MCF 10A (cell line): ENCODE measurements at regions of chr9 and their contacts with region 1.

Region 1: DNA sequence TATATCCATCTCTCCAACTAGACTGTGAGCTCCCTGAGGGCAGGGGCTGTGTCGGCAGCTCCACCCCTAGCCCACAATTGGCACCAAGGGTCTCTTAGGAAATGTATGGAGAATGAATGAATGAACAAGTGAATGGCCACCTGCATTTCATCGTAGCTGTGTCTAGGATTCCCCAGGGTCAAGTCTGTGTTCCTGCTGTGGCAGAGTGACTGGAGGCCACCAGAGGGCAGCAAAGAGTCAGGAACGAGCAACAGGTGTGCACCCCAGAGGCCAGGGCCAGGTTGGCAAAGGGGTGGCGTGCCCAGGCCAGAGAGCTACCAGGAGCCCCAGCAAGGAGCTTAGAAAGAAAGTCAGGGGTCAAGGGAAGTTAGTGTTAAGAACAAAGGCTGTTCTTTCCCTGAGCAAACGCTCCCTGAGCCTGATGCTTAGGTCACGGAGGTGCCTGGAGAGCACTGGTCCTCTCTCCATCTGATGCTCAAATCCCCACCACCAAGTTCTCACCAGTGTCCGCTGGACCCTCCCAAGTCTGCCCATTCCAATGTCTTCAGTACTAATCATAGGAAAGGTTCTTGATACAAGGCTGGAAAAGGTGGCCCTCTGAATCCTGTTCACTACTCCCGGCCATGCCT is 160.7 kb downstream of the PAX5 start:
- DNase-seq: peak; percentile 73
- H3K4me3 Mint-ChIP-seq: no peak overlapping the region
- H3K27ac Mint-ChIP-seq: no peak overlapping the region
- H3K4me1 Mint-ChIP-seq: no peaks in the 10 kb centered on the region
- H3K27me3 Mint-ChIP-seq: peaks cover 63% of the 10 kb centered on the region
- CTCF ChIP-seq: peak; percentile 97

Region 2: DNA sequence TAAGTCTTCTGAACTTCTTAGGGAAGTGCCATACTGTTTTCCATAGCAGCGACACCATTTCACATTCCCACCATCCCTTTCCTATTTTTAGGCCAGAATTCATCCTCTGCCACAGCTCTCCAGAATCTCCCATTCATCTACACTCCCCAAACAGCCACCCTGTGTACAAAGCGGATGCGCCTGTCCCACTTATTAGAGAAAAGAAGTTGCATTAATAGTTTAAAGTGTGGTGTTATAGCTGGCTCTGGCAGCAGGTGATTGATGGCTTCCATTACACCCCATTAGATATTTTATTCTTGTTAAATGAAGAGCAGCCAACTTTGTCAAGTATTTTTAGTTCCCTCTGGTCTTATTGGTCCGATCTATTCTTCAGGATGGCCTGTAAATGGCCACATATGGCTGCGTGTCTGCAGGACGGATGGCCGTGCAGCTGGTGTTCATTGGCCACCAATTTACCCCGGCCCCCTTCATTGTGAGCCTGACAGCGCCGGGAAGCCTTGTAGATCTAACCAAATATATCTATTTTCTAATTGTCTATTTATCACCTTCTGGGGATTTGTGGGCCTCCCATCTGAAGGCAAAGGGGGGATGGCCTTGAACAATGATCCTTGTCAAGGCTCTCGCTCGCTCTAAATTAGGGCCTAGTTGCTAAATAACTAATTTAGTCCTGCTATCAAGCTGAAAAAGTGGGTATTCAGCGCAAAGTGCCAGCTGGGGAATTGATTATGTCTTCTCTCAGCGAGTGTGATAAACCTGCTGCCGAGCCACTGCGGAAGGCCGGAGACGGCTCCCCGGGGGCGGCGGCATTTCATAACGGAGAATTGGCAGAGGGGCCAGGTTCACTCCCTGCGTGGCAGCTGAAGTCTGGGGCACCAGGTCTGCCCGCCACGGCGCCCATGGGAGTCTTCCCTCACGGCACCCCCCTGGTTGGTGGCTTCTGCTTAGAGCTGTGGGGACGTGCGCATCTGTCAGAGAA is 159.6 kb before region 1 on chr9:
- CTCF ChIA-PET with region 1: no interaction called
- POLR2A ChIA-PET with region 1: no interaction called
- intact Hi-C with region 1: no loop called
- DNase-seq: no peak
- H3K4me3 Mint-ChIP-seq: no peak overlapping the region
- H3K27ac Mint-ChIP-seq: no peak overlapping the region
- H3K4me1 Mint-ChIP-seq: no peaks in the 10 kb centered on the region
- H3K27me3 Mint-ChIP-seq: peaks cover 79% of the 10 kb centered on the region
- CTCF ChIP-seq: no peak

Region 3: GRCh38 chr9:36748322-36748899 is 125.0 kb before region 1 on chr9:
- CTCF ChIA-PET with region 1: no interaction called
- POLR2A ChIA-PET with region 1: no interaction called
- intact Hi-C with region 1: no loop called
- DNase-seq: peak; percentile 54
- H3K4me3 Mint-ChIP-seq: no peak overlapping the region
- H3K27ac Mint-ChIP-seq: no peak overlapping the region
- H3K4me1 Mint-ChIP-seq: no peaks in the 10 kb centered on the region
- H3K27me3 Mint-ChIP-seq: peaks cover 90% of the 10 kb centered on the region
- CTCF ChIP-seq: no peak

Region 4: GRCh38 chr9:36765077-36765390 is 108.3 kb before region 1 on chr9:
- CTCF ChIA-PET with region 1: no interaction called
- POLR2A ChIA-PET with region 1: no interaction called
- intact Hi-C with region 1: no loop called
- DNase-seq: no peak
- H3K4me3 Mint-ChIP-seq: no peak overlapping the region
- H3K27ac Mint-ChIP-seq: no peak overlapping the region
- H3K4me1 Mint-ChIP-seq: no peaks in the 10 kb centered on the region
- H3K27me3 Mint-ChIP-seq: peaks cover 55% of the 10 kb centered on the region
- CTCF ChIP-seq: no peak

Region 5: DNA sequence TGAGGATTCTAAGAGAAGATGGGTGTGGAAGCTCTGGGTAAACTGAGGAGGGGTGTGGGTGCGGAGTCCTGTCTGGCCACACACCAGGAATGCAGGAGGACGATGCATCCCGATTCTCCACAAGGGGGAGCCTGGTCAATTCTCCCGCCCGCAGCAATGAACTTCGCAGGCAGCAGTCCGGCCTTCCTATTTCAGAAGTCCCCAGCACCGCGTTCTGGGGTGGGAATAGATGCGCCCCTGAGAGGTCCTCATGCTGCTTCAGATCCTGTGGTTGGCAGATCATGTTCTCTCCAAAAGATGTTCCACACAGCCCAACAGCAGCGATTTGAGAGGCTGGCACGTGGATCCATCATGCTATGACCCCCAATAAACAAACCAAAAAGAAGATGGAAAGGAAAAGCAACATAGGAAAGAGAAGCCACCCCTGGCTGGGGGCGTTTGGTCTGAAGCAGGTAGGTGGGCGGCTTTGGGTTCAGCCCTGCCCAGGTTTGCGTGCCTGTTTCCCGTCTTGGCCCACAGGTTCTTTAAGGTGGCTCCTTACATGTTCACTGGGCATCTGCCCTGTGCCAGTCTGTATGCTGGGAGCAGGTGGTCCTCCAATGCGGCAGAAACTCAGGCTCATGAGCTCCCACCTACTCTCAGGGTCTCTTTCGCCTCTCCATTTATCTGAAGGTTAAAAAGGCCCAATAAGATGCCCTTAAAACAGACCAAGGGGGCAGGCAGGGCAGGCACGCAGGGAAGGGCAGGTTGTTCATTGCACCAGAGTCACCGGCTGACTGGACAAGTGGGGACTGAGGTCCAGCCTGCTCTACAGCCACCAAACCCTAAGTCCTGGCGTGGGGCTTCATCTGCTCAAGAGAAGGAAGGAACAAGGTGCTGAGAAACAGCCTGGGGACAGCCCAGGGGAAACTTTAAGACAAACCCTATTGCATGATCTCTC is 10.9 kb before region 1 on chr9:
- CTCF ChIA-PET with region 1: interaction called, 16 read pairs
- POLR2A ChIA-PET with region 1: no interaction called
- intact Hi-C with region 1: no loop called
- DNase-seq: peak; percentile 48
- H3K4me3 Mint-ChIP-seq: no peak overlapping the region
- H3K27ac Mint-ChIP-seq: no peak overlapping the region
- H3K4me1 Mint-ChIP-seq: no peaks in the 10 kb centered on the region
- H3K27me3 Mint-ChIP-seq: peaks cover 5% of the 10 kb centered on the region
- CTCF ChIP-seq: peak; percentile 44

Region 6: DNA sequence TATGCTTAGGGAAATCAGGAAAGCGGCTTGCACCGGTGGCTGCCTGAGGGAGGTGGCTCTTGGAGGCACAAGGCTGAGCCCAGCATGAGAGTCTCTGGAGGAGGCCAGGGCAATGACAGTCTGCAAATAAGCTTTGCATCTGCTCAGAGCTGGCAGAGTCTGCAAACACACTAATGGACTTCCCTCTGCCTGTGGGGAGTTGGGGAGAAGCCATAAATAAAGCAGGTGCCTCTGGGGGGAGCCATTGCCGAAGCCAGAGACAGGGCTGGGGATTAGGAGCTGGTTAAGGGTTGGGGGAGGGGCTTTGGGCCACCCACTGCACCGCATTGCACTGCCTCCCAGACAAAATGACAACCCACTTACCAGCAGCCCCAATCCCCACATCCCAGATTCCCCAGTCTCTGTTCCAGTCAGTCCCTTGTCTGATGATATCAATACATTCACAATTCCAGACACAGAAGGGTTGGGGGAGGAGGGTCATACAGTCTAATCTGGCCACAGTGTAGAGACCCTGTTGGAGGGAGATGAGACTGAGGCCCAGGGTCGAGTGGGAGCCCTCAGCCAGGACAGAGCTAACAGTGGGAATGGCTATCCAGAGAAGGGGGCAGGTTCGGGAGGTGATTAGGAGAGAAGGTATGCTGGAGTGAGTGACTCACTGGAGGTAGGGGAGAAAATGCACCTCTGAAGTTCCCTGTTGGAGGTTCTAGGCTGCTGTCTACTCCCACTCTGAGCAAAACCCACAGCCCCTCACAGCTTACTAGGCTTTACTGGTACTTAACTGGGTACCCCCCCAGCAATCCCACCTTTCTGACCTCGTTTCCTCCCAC is 107.0 kb after region 1 on chr9:
- CTCF ChIA-PET with region 1: interaction called, 22 read pairs
- POLR2A ChIA-PET with region 1: no interaction called
- intact Hi-C with region 1: no loop called
- DNase-seq: peak; percentile 29
- H3K4me3 Mint-ChIP-seq: no peak overlapping the region
- H3K27ac Mint-ChIP-seq: no peak overlapping the region
- H3K4me1 Mint-ChIP-seq: peaks cover 20% of the 10 kb centered on the region
- H3K27me3 Mint-ChIP-seq: peaks cover 20% of the 10 kb centered on the region
- CTCF ChIP-seq: no peak

Region 7: DNA sequence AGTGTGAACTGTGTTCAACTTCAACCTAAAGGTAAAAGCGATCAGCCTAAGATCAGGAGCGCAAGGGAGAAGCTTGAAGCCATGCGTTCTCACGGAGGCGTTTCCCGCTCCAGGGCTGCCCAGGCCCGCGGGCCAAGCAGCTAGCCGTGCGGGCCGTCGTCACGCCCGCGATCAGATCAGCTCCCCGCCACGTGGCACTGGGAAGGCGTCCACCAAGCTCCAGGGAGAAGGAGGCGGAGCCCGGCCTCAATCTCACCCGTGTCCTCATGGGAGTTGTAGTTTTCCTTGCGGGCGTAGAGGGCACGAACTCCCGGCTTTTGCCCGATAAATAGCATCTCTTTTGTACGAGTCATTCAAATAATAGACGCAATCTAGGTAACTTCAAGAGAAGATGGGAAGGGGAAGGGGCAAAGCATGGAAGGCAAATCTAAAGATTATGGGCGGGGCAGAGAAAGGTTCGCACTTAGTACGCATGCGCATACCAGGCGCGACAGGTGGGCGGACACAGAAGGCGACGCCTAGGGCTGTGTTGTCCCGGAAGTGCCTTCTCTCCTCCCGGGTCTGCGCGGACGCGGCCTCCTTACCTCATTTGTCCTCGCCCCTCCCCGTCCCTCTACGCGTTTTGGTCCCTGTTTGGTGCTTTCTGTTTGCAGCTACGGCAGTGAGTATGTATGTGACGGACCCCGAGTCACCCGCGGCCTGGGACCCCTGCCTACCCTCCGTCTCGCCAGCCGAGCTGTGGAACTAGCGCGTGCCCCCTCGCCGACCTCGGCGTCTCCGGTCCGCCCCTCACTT is 206.2 kb after region 1 on chr9:
- CTCF ChIA-PET with region 1: interaction called, 10 read pairs
- POLR2A ChIA-PET with region 1: no interaction called
- intact Hi-C with region 1: no loop called
- DNase-seq: peak; percentile 95
- H3K4me3 Mint-ChIP-seq: peak overlapping the region; percentile 88
- H3K27ac Mint-ChIP-seq: peak overlapping the region; percentile 93
- H3K4me1 Mint-ChIP-seq: peaks cover 17% of the 10 kb centered on the region
- H3K27me3 Mint-ChIP-seq: no peaks in the 10 kb centered on the region
- CTCF ChIP-seq: no peak

Region 8: GRCh38 chr9:37329576-37329975 is 456.2 kb after region 1 on chr9:
- CTCF ChIA-PET with region 1: interaction called, 22 read pairs
- POLR2A ChIA-PET with region 1: no interaction called
- intact Hi-C with region 1: loop called (anchors 1 kb)
- DNase-seq: peak; percentile 46
- H3K4me3 Mint-ChIP-seq: no peak overlapping the region
- H3K27ac Mint-ChIP-seq: no peak overlapping the region
- H3K4me1 Mint-ChIP-seq: no peaks in the 10 kb centered on the region
- H3K27me3 Mint-ChIP-seq: no peaks in the 10 kb centered on the region
- CTCF ChIP-seq: peak; percentile 39

Region 9: DNA sequence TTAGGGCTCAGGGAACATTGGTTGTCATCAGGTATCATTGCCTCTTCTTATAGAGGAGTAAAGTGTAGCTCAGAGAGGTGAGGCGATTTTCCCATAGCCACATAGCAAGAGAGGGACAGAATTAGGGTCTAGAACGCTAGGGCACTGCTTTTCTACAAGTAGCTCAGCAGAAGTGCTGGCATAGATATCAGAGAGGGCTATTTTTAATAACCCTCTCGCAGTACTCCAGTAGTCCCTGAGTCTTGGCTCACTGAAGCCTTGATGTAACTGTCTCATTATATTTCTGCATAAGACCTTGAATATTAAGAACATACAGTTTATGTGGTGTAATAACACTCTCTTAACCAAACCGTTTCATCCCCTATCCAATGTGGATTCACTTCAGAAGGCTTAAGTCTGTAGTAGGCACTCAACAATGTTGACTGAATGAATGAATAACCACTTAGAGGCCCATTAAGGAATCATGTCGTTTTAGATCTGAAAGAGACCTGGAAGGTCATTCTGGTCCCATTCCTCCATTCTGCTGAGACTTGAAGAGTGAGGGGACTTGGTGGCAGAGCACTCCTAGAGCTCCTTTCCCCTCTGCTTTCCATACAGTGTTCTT is 772.6 kb after region 1 on chr9:
- CTCF ChIA-PET with region 1: no interaction called
- POLR2A ChIA-PET with region 1: no interaction called
- intact Hi-C with region 1: no loop called
- DNase-seq: no peak
- H3K4me3 Mint-ChIP-seq: no peak overlapping the region
- H3K27ac Mint-ChIP-seq: no peak overlapping the region
- H3K4me1 Mint-ChIP-seq: no peaks in the 10 kb centered on the region
- H3K27me3 Mint-ChIP-seq: peaks cover 83% of the 10 kb centered on the region
- CTCF ChIP-seq: no peak